Mucosa of descending colon (tissue), 3 donors: ENCODE measurements at regions of chr5 and their contacts with region 1.

Region 1: DNA sequence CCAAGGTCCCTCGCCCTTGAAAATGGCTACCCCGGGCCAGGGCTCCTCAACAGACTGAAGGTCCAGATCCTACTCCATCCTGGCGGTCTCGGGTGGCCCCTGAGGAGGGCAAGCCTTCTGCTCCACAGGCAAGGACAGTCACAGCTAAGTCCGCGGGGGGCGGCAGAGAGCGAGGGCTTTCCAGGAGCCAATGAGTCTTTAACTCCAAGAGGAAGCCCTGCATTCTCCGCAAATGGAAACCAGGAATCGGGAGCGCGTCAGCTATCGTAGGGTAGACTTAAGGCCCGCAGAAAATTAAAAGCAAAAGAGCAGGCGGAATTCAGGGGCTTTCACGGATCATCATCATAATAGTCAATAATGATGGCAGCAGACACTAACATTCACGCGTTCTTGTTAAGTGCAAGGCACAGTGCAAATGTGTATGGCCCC is 87.8 kb upstream of the TNFAIP8 start:
- DNase-seq: peak; percentile 91 to 93 (median 92)
- ATAC-seq: peak; percentile 79
- H3K4me3 ChIP-seq: peak overlapping the region; percentile 35
- H3K4me1 ChIP-seq: no peaks in the 10 kb centered on the region
- CTCF ChIP-seq: peak; percentile 72

Region 2: GRCh38 chr5:117954331-117954730 is 1313.6 kb before region 1 on chr5:
- intact Hi-C with region 1: no loop called
- DNase-seq: no peak
- ATAC-seq: no peak
- H3K4me3 ChIP-seq: no peak overlapping the region
- H3K4me1 ChIP-seq: no peaks in the 10 kb centered on the region
- CTCF ChIP-seq: no peak

Region 3: GRCh38 chr5:119411935-119412602 is 144.1 kb after region 1 on chr5:
- intact Hi-C with region 1: loop called in 1 of 2 experiments (anchors 10 kb)
- DNase-seq: peak in 2 of 3 donors; percentile 54 to 83
- ATAC-seq: peak; percentile 96
- H3K4me3 ChIP-seq: no peak overlapping the region
- H3K4me1 ChIP-seq: peaks cover 6% of the 10 kb centered on the region
- CTCF ChIP-seq: peak; percentile 75